Colonic mucosa (tissue), 4 donors: ENCODE measurements at regions of chr7 and their contacts with region 1.

Region 1: GRCh38 chr7:128883622-128884501 is 21.2 kb downstream of the ATP6V1F start:
- DNase-seq: peak; percentile 89
- H3K4me3 ChIP-seq: peak overlapping the region; percentile 12
- H3K27ac ChIP-seq: no peak overlapping the region
- H3K4me1 ChIP-seq: no peaks in the 10 kb centered on the region
- H3K27me3 ChIP-seq: no peaks in the 10 kb centered on the region
- CTCF ChIP-seq: peak; percentile 96

Region 2: DNA sequence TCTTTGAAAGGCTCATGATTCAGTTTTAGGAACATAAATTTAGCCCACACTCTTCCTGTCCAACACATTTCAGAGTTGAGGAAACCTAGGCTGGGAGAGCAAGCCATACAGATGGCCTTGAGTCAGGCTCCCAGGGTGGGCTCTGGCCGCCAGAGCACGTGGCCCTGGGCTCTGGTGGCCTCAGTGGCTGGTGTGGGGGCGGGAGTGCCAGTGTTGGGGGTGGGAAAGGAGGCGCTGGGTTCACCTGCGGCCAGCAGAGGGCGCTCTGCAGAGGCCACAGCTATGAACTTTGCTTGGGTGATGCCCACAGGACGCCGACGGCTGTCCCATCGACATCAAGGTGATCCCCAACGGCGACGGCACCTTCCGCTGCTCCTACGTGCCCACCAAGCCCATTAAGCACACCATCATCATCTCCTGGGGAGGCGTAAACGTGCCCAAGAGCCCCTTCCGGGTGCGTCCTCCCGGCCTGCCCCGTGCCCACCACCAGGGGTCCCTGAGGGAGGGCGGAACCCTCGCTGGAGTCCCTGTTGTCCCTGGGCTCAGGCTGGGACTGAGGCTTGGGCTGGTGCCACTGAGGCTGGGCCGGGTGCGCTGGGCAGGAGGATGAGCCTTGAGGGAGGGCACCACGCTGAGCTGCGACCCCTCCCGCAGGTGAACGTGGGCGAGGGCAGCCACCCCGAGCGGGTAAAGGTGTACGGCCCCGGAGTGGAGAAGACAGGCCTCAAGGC is 41.8 kb before region 1 on chr7:
- intact Hi-C with region 1: loop called (anchors 2 kb)
- DNase-seq: peak; percentile 53
- H3K4me3 ChIP-seq: no peak overlapping the region
- H3K27ac ChIP-seq: no peak overlapping the region
- H3K4me1 ChIP-seq: no peaks in the 10 kb centered on the region
- H3K27me3 ChIP-seq: no peaks in the 10 kb centered on the region
- CTCF ChIP-seq: peak; percentile 76